ENCODE measurements at regions of chr7 and their contacts with region 1.

Region 1: DNA sequence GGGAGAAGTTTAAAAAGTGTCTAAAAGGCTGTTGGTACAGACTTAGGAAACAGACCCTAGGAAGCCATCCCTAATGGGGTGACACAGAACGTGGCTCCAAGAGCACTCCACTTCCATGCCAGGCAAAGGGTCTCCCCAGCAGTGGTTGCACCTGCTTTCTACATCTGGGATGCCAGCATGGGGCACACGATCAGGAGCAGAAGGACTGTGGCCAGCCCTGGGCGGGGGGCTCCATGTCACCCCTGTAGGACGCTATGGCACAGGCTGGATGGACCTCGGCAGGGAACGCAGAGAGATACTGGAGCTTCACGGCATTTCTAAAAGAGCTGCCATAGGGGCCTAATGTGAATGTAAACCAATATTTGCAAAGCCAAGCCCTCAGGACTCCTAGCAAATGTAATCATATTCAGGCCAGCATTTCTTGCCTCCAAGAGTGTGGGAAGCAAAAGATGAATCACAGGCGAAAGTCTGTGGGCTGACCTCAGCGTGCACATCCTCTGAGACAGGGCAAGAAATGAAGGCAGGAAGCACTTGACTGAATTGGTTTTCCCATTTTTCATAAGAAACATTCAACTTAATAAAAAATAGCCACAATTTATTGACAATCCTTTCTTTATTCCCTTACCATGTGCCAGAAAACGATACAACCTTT is 93.9 kb downstream of the ATXN7L1 start:
- DNase-seq: no peak
- H3K4me3 Mint-ChIP-seq: no peak overlapping the region
- H3K27ac Mint-ChIP-seq: no peak overlapping the region
- H3K4me1 Mint-ChIP-seq: peaks cover 19% of the 10 kb centered on the region
- H3K27me3 Mint-ChIP-seq: peaks cover 21% of the 10 kb centered on the region

Region 2: GRCh38 chr7:105664816-105665525 is 117.5 kb before region 1 on chr7:
- intact Hi-C with region 1: no loop called
- DNase-seq: no peak
- H3K4me3 Mint-ChIP-seq: no peak overlapping the region
- H3K27ac Mint-ChIP-seq: no peak overlapping the region
- H3K4me1 Mint-ChIP-seq: no peaks in the 10 kb centered on the region
- H3K27me3 Mint-ChIP-seq: no peaks in the 10 kb centered on the region

Region 3: DNA sequence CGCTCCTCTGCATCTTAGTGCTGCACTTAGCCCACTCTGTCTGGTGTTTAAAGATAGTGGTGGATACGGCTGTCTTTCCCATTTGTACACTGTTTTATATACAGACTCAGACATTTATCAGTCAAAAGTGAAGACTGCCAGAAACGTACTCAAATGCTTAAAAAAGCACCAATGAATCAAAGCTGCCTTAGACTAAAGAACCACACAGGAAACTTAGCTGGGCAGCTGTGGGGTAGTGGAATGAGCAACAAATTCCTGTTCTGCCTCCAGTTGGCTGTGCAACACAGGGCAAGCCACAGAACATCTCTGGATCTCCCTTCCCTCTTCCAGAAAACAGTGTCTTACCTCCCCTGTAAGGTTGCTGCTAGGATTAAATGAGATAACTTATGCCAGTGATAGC is 17.9 kb after region 1 on chr7:
- intact Hi-C with region 1: loop called (anchors 2 kb)
- DNase-seq: no peak
- H3K4me3 Mint-ChIP-seq: no peak overlapping the region
- H3K27ac Mint-ChIP-seq: peak overlapping the region; percentile 59
- H3K4me1 Mint-ChIP-seq: peaks cover 44% of the 10 kb centered on the region
- H3K27me3 Mint-ChIP-seq: no peaks in the 10 kb centered on the region

Region 4: GRCh38 chr7:105849122-105849855 is 66.8 kb after region 1 on chr7:
- intact Hi-C with region 1: loop called (anchors 5 kb)
- DNase-seq: peak; percentile 69
- H3K4me3 Mint-ChIP-seq: peak overlapping the region; percentile 37
- H3K27ac Mint-ChIP-seq: peak overlapping the region; percentile 75
- H3K4me1 Mint-ChIP-seq: peaks cover 58% of the 10 kb centered on the region
- H3K27me3 Mint-ChIP-seq: no peaks in the 10 kb centered on the region